MCF 10A (cell line): ENCODE measurements at regions of chr6 and their contacts with region 1.

Region 1: GRCh38 chr6:25942561-25943147 is 12.2 kb upstream of the SLC17A2 start:
- DNase-seq: peak; percentile 60
- H3K4me3 Mint-ChIP-seq: no peak overlapping the region
- H3K27ac Mint-ChIP-seq: no peak overlapping the region
- H3K4me1 Mint-ChIP-seq: no peaks in the 10 kb centered on the region
- H3K27me3 Mint-ChIP-seq: no peaks in the 10 kb centered on the region
- CTCF ChIP-seq: peak; percentile 43

Region 2: GRCh38 chr6:25697537-25698345 is 244.9 kb before region 1 on chr6:
- CTCF ChIA-PET with region 1: no interaction called
- POLR2A ChIA-PET with region 1: no interaction called
- intact Hi-C with region 1: no loop called
- DNase-seq: peak; percentile 44
- H3K4me3 Mint-ChIP-seq: no peak overlapping the region
- H3K27ac Mint-ChIP-seq: no peak overlapping the region
- H3K4me1 Mint-ChIP-seq: no peaks in the 10 kb centered on the region
- H3K27me3 Mint-ChIP-seq: no peaks in the 10 kb centered on the region
- CTCF ChIP-seq: no peak

Region 3: GRCh38 chr6:25788305-25788922 is 154.2 kb before region 1 on chr6:
- CTCF ChIA-PET with region 1: no interaction called
- POLR2A ChIA-PET with region 1: no interaction called
- intact Hi-C with region 1: loop called (anchors 1 kb)
- DNase-seq: peak; percentile 77
- H3K4me3 Mint-ChIP-seq: no peak overlapping the region
- H3K27ac Mint-ChIP-seq: no peak overlapping the region
- H3K4me1 Mint-ChIP-seq: no peaks in the 10 kb centered on the region
- H3K27me3 Mint-ChIP-seq: no peaks in the 10 kb centered on the region
- CTCF ChIP-seq: peak; percentile 32

Region 4: GRCh38 chr6:26054857-26055669 is 112.4 kb after region 1 on chr6:
- CTCF ChIA-PET with region 1: no interaction called
- POLR2A ChIA-PET with region 1: no interaction called
- intact Hi-C with region 1: no loop called
- DNase-seq: peak; percentile 96
- H3K4me3 Mint-ChIP-seq: peak overlapping the region; percentile 74
- H3K27ac Mint-ChIP-seq: peak overlapping the region; percentile 92
- H3K4me1 Mint-ChIP-seq: no peaks in the 10 kb centered on the region
- H3K27me3 Mint-ChIP-seq: no peaks in the 10 kb centered on the region
- CTCF ChIP-seq: no peak

Region 5: GRCh38 chr6:26249957-26250697 is 307.5 kb after region 1 on chr6:
- CTCF ChIA-PET with region 1: no interaction called
- POLR2A ChIA-PET with region 1: no interaction called
- intact Hi-C with region 1: no loop called
- DNase-seq: peak; percentile 87
- H3K4me3 Mint-ChIP-seq: peak overlapping the region; percentile 94
- H3K27ac Mint-ChIP-seq: peak overlapping the region; percentile 63
- H3K4me1 Mint-ChIP-seq: peaks cover 7% of the 10 kb centered on the region
- H3K27me3 Mint-ChIP-seq: no peaks in the 10 kb centered on the region
- CTCF ChIP-seq: peak; percentile 42